Activated B cell treated with CpG ODN at 0.5 μM for 24 hours (primary cell): ENCODE measurements at regions of chr16 and their contacts with region 1.

Region 1: DNA sequence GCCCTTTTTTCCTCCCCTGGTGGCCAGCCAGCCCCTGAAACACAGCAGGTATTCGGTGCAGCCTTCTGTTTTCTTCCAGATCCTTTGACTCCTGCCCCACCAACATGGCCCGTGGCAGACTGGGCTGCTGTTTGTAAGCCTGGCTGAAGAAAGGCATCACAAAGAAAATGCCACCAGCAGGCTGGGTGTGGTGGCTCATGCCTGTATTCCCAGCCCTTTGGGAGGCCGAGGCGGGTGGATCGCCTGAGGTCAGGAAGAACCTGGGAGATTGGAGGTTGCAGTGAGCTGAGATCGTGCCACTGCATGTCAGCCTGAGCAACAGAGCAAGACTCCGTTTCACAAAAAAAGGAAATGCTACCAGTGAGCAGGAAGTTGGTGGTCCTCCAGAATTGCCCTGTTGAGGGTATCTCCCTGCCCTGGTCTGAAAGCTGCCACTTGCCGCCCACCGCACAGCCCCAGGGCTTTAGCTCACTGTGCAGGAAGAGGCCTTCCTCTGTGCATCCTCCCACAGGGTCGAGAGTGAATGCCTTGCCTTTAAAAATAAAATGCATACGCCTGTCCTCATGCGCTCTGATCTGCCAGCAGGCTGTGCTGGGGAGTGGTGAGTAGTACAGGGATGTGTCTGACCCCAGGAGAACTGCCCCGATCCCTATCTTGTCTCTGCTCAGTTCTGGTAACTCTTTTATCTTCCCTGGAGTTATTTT is 587.7 kb downstream of the MAF start:
- DNase-seq: peak; percentile 22
- ATAC-seq: peak; percentile 98
- H3K4me3 Mint-ChIP-seq: peak overlapping the region; percentile 47
- H3K27ac Mint-ChIP-seq: peak overlapping the region; percentile 18
- H3K4me1 Mint-ChIP-seq: peaks cover 26% of the 10 kb centered on the region
- H3K27me3 Mint-ChIP-seq: no peaks in the 10 kb centered on the region
- CTCF ChIP-seq: no peak

Region 2: GRCh38 chr16:78742501-78743283 is 270.2 kb before region 1 on chr16:
- CTCF ChIA-PET with region 1: no interaction called
- POLR2A ChIA-PET with region 1: no interaction called
- intact Hi-C with region 1: no loop called
- DNase-seq: peak; percentile 36
- ATAC-seq: peak; percentile 92
- H3K4me3 Mint-ChIP-seq: peak overlapping the region; percentile 81
- H3K27ac Mint-ChIP-seq: peak overlapping the region; percentile 91
- H3K4me1 Mint-ChIP-seq: peaks cover 47% of the 10 kb centered on the region
- H3K27me3 Mint-ChIP-seq: no peaks in the 10 kb centered on the region
- CTCF ChIP-seq: no peak

Region 3: GRCh38 chr16:78984887-78985464 is 27.9 kb before region 1 on chr16:
- CTCF ChIA-PET with region 1: interaction called, 3 read pairs
- POLR2A ChIA-PET with region 1: interaction called, 3 read pairs
- intact Hi-C with region 1: loop called (anchors 1 kb)
- DNase-seq: no peak
- ATAC-seq: no peak
- H3K4me3 Mint-ChIP-seq: no peak overlapping the region
- H3K27ac Mint-ChIP-seq: no peak overlapping the region
- H3K4me1 Mint-ChIP-seq: peaks cover 14% of the 10 kb centered on the region
- H3K27me3 Mint-ChIP-seq: no peaks in the 10 kb centered on the region
- CTCF ChIP-seq: no peak

Region 4: GRCh38 chr16:78996790-78997189 is 16.1 kb before region 1 on chr16:
- CTCF ChIA-PET with region 1: no interaction called
- POLR2A ChIA-PET with region 1: no interaction called
- intact Hi-C with region 1: no loop called
- DNase-seq: no peak
- ATAC-seq: no peak
- H3K4me3 Mint-ChIP-seq: no peak overlapping the region
- H3K27ac Mint-ChIP-seq: no peak overlapping the region
- H3K4me1 Mint-ChIP-seq: no peaks in the 10 kb centered on the region
- H3K27me3 Mint-ChIP-seq: no peaks in the 10 kb centered on the region
- CTCF ChIP-seq: no peak